MCF 10A (cell line): ENCODE measurements at regions of chr16 and their contacts with region 1.

Region 1: DNA sequence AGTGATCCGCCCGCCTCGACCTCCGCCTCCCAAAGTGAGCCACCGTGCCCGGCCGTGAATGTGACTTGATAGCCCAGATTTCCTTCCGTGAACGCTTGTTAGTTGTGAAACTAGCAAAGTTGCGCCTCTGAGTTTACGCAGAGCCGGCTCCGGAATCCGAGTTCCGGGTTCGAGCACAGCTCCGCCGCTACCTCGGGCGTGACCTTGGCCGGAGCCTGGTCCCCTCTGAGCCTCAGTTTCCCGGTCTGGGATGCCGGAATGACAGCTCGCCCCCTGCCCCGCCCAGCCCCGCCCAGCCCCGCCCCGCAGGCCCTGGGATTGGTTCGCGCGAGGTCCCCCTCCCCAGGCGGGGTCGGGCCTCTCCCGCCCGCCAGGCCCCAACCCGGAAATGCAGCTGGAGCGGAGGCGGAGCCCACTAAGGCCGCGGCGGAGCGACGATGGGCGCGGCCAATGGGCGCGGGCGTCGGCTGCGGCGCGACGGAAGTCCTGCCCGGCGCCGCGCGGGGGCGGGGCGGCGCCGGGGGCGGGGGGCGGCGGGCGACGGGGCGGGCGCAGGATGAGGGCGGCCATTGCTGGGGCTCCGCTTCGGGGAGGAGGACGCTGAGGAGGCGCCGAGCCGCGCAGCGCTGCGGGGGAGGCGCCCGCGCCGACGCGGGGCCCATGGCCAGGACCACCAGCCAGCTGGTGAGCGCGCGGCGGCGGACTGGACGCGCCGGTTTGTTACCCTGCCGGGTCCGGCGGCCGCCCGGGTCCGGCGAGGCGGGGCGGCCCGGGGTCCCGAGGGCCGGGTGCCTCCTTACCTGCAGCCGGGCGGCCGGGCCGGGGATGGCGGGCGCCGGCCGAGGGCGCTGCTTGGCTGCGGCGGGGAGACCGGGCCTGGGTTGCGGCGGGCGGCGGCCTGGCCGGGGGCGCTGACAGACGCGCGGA is at the start of gene PDPK1:
- DNase-seq: peak; percentile 95
- H3K4me3 Mint-ChIP-seq: peak within 1 kb of the TSS; percentile 79
- H3K27ac Mint-ChIP-seq: peak within 1 kb of the TSS; percentile 79
- H3K4me1 Mint-ChIP-seq: peaks cover 12% of the 10 kb centered on the region
- H3K27me3 Mint-ChIP-seq: no peaks in the 10 kb centered on the region
- CTCF ChIP-seq: no peak
- total RNA-seq, gene PDPK1: 32.3 and 38.0 TPM in 2 replicates

Region 2: DNA sequence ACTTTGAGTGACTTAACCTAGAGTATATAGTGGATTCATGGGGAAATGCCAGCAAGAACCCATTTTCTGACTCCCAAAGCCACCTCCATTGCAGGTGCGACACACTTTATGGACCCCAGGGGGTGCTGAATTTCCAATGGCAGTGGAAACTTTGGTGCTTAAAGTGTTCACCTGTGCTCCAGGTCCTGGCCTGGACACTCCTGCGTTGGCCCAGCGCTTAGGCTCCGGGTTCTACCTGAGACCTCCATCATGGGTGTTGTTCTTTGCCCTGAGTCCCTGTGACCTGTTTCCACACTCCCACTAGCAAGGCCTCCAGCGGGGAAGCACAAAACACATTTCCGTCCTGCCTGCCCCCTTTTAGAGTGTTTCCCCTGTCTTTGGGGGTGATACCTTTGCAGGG is 105.4 kb before region 1 on chr16:
- CTCF ChIA-PET with region 1: no interaction called
- POLR2A ChIA-PET with region 1: no interaction called
- intact Hi-C with region 1: no loop called
- DNase-seq: no peak
- H3K4me3 Mint-ChIP-seq: no peak overlapping the region
- H3K27ac Mint-ChIP-seq: no peak overlapping the region
- H3K4me1 Mint-ChIP-seq: peaks cover 10% of the 10 kb centered on the region
- H3K27me3 Mint-ChIP-seq: no peaks in the 10 kb centered on the region
- CTCF ChIP-seq: no peak

Region 3: GRCh38 chr16:2513405-2514322 is 24.1 kb before region 1 on chr16 and contains the start of gene ATP6V0C:
- CTCF ChIA-PET with region 1: no interaction called
- POLR2A ChIA-PET with region 1: interaction called, 62 read pairs
- intact Hi-C with region 1: no loop called
- DNase-seq: peak; percentile 88
- H3K4me3 Mint-ChIP-seq: peak within 1 kb of the TSS; percentile 87
- H3K27ac Mint-ChIP-seq: peak within 1 kb of the TSS; percentile 94
- H3K4me1 Mint-ChIP-seq: peaks cover 29% of the 10 kb centered on the region
- H3K27me3 Mint-ChIP-seq: no peaks in the 10 kb centered on the region
- CTCF ChIP-seq: no peak
- total RNA-seq, gene ATP6V0C: 173 and 198 TPM in 2 replicates

Region 4: GRCh38 chr16:2520092-2520783 is 17.5 kb before region 1 on chr16 and contains the start of gene AMDHD2:
- CTCF ChIA-PET with region 1: interaction called, 5 read pairs
- POLR2A ChIA-PET with region 1: interaction called, 62 read pairs
- intact Hi-C with region 1: no loop called
- DNase-seq: peak; percentile 86
- H3K4me3 Mint-ChIP-seq: peak within 1 kb of the TSS; percentile 78
- H3K27ac Mint-ChIP-seq: peak within 1 kb of the TSS; percentile 54
- H3K4me1 Mint-ChIP-seq: peaks cover 38% of the 10 kb centered on the region
- H3K27me3 Mint-ChIP-seq: no peaks in the 10 kb centered on the region
- CTCF ChIP-seq: no peak
- total RNA-seq, gene AMDHD2: 15.8 and 26.5 TPM in 2 replicates